ENCODE measurements at regions of chr12 and their contacts with region 1.

Region 1: GRCh38 chr12:56189176-56189917 is at the start of gene SMARCC2:
- DNase-seq: peak; percentile 93
- ATAC-seq: peak; percentile 85
- total RNA-seq, gene SMARCC2: 81.4 TPM

Region 2: GRCh38 chr12:56127888-56128669 is 61.3 kb before region 1 on chr12 and contains the start of gene ESYT1:
- intact Hi-C with region 1: loop called (anchors 10 kb)
- DNase-seq: peak; percentile 97
- ATAC-seq: peak; percentile 94
- total RNA-seq, gene ESYT1: 28.0 TPM

Region 3: DNA sequence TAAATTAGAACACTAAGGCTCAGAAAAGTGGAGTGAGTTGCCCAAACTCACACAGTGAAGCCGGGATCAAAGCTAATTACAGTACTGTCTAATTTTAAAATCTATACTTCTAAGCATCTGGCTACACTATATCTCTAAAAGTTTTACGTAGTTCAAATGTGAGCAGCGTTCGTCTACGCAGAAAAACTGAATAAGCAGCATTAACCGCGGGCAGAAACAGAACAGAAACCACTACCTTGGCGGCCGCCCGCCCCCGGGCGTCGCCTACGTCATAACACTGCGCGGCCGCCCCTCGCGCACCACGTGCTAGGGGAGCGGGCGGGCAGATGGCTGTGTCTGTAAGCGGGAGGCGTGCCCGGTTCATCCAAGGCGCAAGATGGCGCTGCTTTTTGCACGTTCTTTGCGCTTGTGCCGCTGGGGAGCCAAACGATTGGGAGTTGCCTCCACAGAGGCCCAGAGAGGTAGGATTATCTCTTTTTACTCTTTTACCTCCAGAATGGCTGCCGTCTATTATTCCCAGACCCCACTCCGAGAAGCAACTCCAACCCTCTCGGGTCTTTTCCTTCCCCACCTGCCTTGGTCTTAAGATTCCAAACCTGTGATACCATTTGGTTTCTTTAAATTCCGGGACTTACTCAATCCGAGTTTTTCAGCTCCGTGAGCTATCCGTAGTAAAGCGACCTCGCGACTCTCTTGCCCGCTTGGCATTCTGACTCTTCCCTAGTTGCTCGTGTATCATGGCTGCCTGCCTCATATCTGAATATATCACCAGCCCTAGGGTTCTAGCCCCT is 279.1 kb after region 1 on chr12 and contains the start of gene SPRYD4:
- intact Hi-C with region 1: loop called (anchors 10 kb)
- DNase-seq: peak; percentile 96
- ATAC-seq: peak; percentile 98
- total RNA-seq, gene SPRYD4: 3.1 TPM

Measured in left ventricle myocardium superior (tissue), 1 donor.